ENCODE measurements at regions of chr5 and their contacts with region 1.

Region 1: GRCh38 chr5:127928053-127928452 is 155.5 kb upstream of the SLC12A2 start:
- DNase-seq: no peak
- ATAC-seq: no peak
- H3K4me3 ChIP-seq: no peak overlapping the region
- H3K27ac ChIP-seq: no peak overlapping the region
- H3K4me1 ChIP-seq: peaks cover 0 to 9% (median 0%) of the 10 kb centered on the region in 12 donors
- H3K27me3 ChIP-seq: no peaks in the 10 kb centered on the region
- CTCF ChIP-seq: no peak
- POLR2A ChIP-seq: no peak

Region 2: DNA sequence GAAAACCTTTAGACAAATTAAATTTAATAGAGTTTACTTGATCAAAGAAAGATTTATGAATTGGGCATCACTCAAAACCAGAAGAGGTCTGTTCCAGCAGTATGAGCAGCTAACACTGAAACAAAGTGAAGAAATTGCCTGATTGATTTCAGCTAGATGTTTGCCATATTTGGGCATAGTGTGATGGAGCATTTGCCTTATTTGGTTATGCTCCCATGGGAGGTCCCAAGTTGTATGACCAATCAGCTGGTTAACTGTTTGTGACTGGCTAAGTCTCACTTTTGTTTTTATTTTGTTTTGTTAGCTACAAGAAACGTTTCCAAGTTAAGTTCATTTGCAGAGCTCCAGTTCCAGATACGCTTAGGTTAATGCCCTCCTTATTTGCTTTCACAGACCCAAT is 1204.4 kb before region 1 on chr5:
- intact Hi-C with region 1: no loop called
- DNase-seq: no peak
- ATAC-seq: no peak
- H3K4me3 ChIP-seq: no peak overlapping the region
- H3K27ac ChIP-seq: no peak overlapping the region
- H3K4me1 ChIP-seq: no peaks in the 10 kb centered on the region
- H3K27me3 ChIP-seq: peaks cover 0 to 7% (median 0%) of the 10 kb centered on the region in 9 donors
- CTCF ChIP-seq: no peak
- POLR2A ChIP-seq: no peak

Region 3: GRCh38 chr5:127909078-127909477 is 19.0 kb before region 1 on chr5:
- intact Hi-C with region 1: loop called in 1 of 10 experiments (anchors 2 kb)
- DNase-seq: no peak
- ATAC-seq: peak in 3 of 4 donors; percentile 65 to 70 (median 70)
- H3K4me3 ChIP-seq: no peak overlapping the region
- H3K27ac ChIP-seq: no peak overlapping the region
- H3K4me1 ChIP-seq: peaks cover 0 to 25% (median 4%) of the 10 kb centered on the region in 12 donors
- H3K27me3 ChIP-seq: no peaks in the 10 kb centered on the region
- CTCF ChIP-seq: peak in 11 of 12 donors; percentile 32 to 64 (median 47)
- POLR2A ChIP-seq: no peak

Measured in heart left ventricle (tissue), 16 donors.